Activated CD8-positive, alpha-beta T cell treated with anti-CD3 and anti-CD28 coated beads, Interleukin-2, amount 10 ng/mL, durations not matched to agents 7 days and 5 days (primary cell): ENCODE measurements at regions of chr16 and their contacts with region 1.

Region 1: DNA sequence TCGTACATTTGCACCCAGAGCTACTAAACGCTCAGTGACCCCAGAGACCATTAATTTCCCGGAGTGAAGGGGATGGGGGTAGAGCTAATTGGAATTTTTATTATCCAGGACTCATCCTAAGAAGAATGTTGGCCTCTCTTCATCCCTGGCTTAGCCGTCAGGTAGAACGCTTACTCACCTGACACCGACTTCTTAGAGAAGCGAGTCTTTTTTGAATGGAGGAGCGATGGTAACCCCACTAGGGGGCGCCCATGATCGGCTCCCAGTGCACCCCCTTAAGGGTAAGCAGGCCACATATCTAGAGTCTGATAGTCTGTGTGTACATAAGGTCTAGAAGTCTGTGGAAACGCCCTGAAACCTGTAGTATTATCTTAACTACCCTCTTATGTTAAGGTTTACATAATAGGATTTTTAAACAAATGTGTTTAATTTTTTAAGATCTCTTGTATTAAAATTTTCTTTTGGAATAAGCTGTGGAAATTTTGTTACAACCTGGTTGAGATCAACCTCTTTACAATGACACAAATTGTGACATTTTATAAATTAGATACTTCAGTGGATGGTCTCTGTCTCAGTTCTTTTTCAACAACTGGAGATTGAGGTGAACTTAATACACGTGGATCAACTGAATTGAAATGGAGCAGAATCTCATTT is 229.8 kb downstream of the CPPED1 start:
- DNase-seq: peak; percentile 76
- ATAC-seq: peak; percentile 71
- H3K4me3 Mint-ChIP-seq: no peak overlapping the region
- H3K27ac Mint-ChIP-seq: no peak overlapping the region
- H3K4me1 Mint-ChIP-seq: peaks cover 9% of the 10 kb centered on the region
- H3K27me3 Mint-ChIP-seq: no peaks in the 10 kb centered on the region

Region 2: GRCh38 chr16:12535535-12536411 is 38.1 kb before region 1 on chr16:
- CTCF ChIA-PET with region 1: interaction called, 30 read pairs
- POLR2A ChIA-PET with region 1: no interaction called
- DNase-seq: peak; percentile 49
- ATAC-seq: peak; percentile 62
- H3K4me3 Mint-ChIP-seq: peak overlapping the region; percentile 9
- H3K27ac Mint-ChIP-seq: peak overlapping the region; percentile 84
- H3K4me1 Mint-ChIP-seq: peaks cover 77% of the 10 kb centered on the region
- H3K27me3 Mint-ChIP-seq: no peaks in the 10 kb centered on the region

Region 3: GRCh38 chr16:12553191-12553590 is 20.7 kb before region 1 on chr16:
- CTCF ChIA-PET with region 1: interaction called, 10 read pairs
- POLR2A ChIA-PET with region 1: no interaction called
- DNase-seq: no peak
- ATAC-seq: no peak
- H3K4me3 Mint-ChIP-seq: no peak overlapping the region
- H3K27ac Mint-ChIP-seq: no peak overlapping the region
- H3K4me1 Mint-ChIP-seq: peaks cover 17% of the 10 kb centered on the region
- H3K27me3 Mint-ChIP-seq: no peaks in the 10 kb centered on the region

Region 4: GRCh38 chr16:12637002-12637401 is 63.1 kb after region 1 on chr16:
- CTCF ChIA-PET with region 1: no interaction called
- POLR2A ChIA-PET with region 1: no interaction called
- DNase-seq: no peak
- ATAC-seq: no peak
- H3K4me3 Mint-ChIP-seq: no peak overlapping the region
- H3K27ac Mint-ChIP-seq: no peak overlapping the region
- H3K4me1 Mint-ChIP-seq: no peaks in the 10 kb centered on the region
- H3K27me3 Mint-ChIP-seq: no peaks in the 10 kb centered on the region

Region 5: GRCh38 chr16:12819126-12820117 is 245.6 kb after region 1 on chr16:
- CTCF ChIA-PET with region 1: interaction called, 10 read pairs
- POLR2A ChIA-PET with region 1: no interaction called
- DNase-seq: peak; percentile 81
- ATAC-seq: peak; percentile 69
- H3K4me3 Mint-ChIP-seq: no peak overlapping the region
- H3K27ac Mint-ChIP-seq: no peak overlapping the region
- H3K4me1 Mint-ChIP-seq: peaks cover 22% of the 10 kb centered on the region
- H3K27me3 Mint-ChIP-seq: no peaks in the 10 kb centered on the region